ENCODE measurements at regions of chr4 and their contacts with region 1.

Region 1: DNA sequence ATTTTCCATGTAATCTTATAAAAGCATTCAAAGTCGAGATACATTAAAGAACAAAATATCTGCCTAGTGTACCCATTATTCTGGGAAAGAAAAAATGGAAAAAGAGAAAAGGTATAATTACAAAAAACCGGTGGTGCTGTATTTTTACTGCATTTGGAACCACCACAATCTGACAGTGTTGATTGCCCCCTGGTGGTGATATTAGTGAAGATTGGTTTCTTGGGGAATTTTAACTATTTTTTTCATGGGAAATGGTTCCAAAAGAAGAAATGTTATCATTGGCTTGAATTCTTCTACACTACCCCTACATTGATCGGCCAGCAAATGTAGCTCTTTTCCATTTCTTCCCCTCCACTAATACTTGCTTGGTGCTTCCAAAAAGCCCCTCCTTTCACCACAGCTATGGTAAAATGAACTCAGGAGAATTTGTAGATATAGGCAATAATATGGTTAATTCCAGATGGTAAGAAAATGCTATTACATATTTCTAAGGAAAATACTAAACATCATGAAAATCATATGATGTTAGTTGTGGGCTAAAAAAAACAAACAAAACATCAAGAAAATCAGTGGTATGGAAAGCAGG is 50.0 kb downstream of the COX18 start:
- DNase-seq: peak in 2 of 4 donors; percentile 14 to 15
- ATAC-seq: no peak
- H3K4me3 ChIP-seq: no peak overlapping the region
- H3K27ac ChIP-seq: no peak overlapping the region
- H3K4me1 ChIP-seq: no peaks in the 10 kb centered on the region
- H3K27me3 ChIP-seq: no peaks in the 10 kb centered on the region
- CTCF ChIP-seq: peak; percentile 26 to 72 (median 61)
- POLR2A ChIP-seq: no peak

Region 2: DNA sequence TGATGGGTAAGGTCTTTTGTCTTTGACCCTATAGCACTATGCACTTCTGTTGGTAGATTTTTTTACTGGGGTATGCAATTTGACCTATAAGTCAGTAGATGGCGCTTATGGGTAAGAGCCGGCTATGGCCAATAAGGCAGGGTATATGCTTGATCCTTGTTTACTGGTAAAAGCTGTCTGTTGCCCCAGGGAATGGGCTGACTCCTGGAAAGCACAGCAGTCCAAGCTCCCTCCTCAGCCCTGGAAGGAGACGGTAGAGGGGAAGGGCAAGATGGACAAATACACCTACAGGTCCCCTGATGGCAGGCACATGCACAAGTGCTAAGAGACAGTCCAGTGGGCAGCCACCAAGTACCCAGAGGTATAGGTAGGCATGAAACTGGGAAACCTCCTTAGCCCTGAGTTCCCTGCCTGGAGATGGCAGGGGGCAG is 514.2 kb before region 1 on chr4:
- intact Hi-C with region 1: loop called (anchors 10 kb)
- DNase-seq: peak in 2 of 4 donors; percentile 14
- ATAC-seq: peak; percentile 59
- H3K4me3 ChIP-seq: no peak overlapping the region
- H3K27ac ChIP-seq: no peak overlapping the region
- H3K4me1 ChIP-seq: no peaks in the 10 kb centered on the region
- H3K27me3 ChIP-seq: no peaks in the 10 kb centered on the region
- CTCF ChIP-seq: peak; percentile 35 to 70 (median 60)
- POLR2A ChIP-seq: no peak

Region 3: GRCh38 chr4:73222466-73223257 is 203.1 kb after region 1 on chr4:
- intact Hi-C with region 1: no loop called
- DNase-seq: peak; percentile 66 to 90 (median 78)
- ATAC-seq: peak; percentile 100
- H3K4me3 ChIP-seq: peak overlapping the region in 1 of 2 donors; percentile 38
- H3K27ac ChIP-seq: peak overlapping the region; percentile 76 to 95 (median 86)
- H3K4me1 ChIP-seq: peaks cover 30% of the 10 kb centered on the region
- H3K27me3 ChIP-seq: no peaks in the 10 kb centered on the region
- CTCF ChIP-seq: peak in 1 of 7 experiments; percentile 5
- POLR2A ChIP-seq: peak; percentile 45 to 93 (median 91)

Region 4: GRCh38 chr4:73904491-73904890 is 884.9 kb after region 1 on chr4:
- intact Hi-C with region 1: no loop called
- DNase-seq: no peak
- ATAC-seq: no peak
- H3K4me3 ChIP-seq: no peak overlapping the region
- H3K27ac ChIP-seq: no peak overlapping the region
- H3K4me1 ChIP-seq: no peaks in the 10 kb centered on the region
- H3K27me3 ChIP-seq: no peaks in the 10 kb centered on the region
- CTCF ChIP-seq: no peak
- POLR2A ChIP-seq: no peak